ENCODE measurements at regions of chr12 and their contacts with region 1.

Region 1: GRCh38 chr12:47779301-47779942 is 6.4 kb downstream of the SLC48A1 start:
- DNase-seq: peak; percentile 92
- CTCF ChIP-seq: peak; percentile 85

Region 2: GRCh38 chr12:47715393-47715876 is 64.0 kb before region 1 on chr12:
- in situ Hi-C with region 1: loop called (anchors 10 kb)
- DNase-seq: peak; percentile 82
- CTCF ChIP-seq: peak; percentile 62

Region 3: GRCh38 chr12:48061948-48062719 is 282.7 kb after region 1 on chr12:
- in situ Hi-C with region 1: no loop called
- DNase-seq: no peak
- CTCF ChIP-seq: no peak